Activated T-helper 1 cell treated with anti-CD3 and anti-CD28 coated beads, Interleukin-12 subunit alpha, Interleukin-12 subunit beta, Interleukin-2, Interleukin-4 antibody, amounts not matched to agents 30 ng/mL and 10 ng/mL and 1 ng/mL, durations not matched to agents 14 hours and 24 hours and 36 hours (primary cell): ENCODE measurements at regions of chr1 and their contacts with region 1.

Region 1: GRCh38 chr1:199041173-199041914 is 402.5 kb downstream of the PTPRC start:
- DNase-seq: peak; percentile 66
- H3K4me3 Mint-ChIP-seq: peak overlapping the region; percentile 35
- H3K27ac Mint-ChIP-seq: peak overlapping the region; percentile 83
- H3K4me1 Mint-ChIP-seq: peaks cover 54% of the 10 kb centered on the region
- H3K27me3 Mint-ChIP-seq: no peaks in the 10 kb centered on the region

Region 2: GRCh38 chr1:198620951-198621824 is 420.2 kb before region 1 on chr1:
- intact Hi-C with region 1: loop called (anchors 5 kb)
- DNase-seq: peak; percentile 66
- H3K4me3 Mint-ChIP-seq: peak overlapping the region; percentile 84
- H3K27ac Mint-ChIP-seq: peak overlapping the region; percentile 99
- H3K4me1 Mint-ChIP-seq: peaks cover 82% of the 10 kb centered on the region
- H3K27me3 Mint-ChIP-seq: no peaks in the 10 kb centered on the region

Region 3: GRCh38 chr1:198880818-198881597 is 160.3 kb before region 1 on chr1:
- intact Hi-C with region 1: loop called (anchors 1 kb)
- DNase-seq: no peak
- H3K4me3 Mint-ChIP-seq: no peak overlapping the region
- H3K27ac Mint-ChIP-seq: peak overlapping the region; percentile 71
- H3K4me1 Mint-ChIP-seq: peaks cover 59% of the 10 kb centered on the region
- H3K27me3 Mint-ChIP-seq: no peaks in the 10 kb centered on the region

Region 4: GRCh38 chr1:198892065-198892464 is 149.3 kb before region 1 on chr1:
- intact Hi-C with region 1: no loop called
- DNase-seq: no peak
- H3K4me3 Mint-ChIP-seq: no peak overlapping the region
- H3K27ac Mint-ChIP-seq: no peak overlapping the region
- H3K4me1 Mint-ChIP-seq: peaks cover 56% of the 10 kb centered on the region
- H3K27me3 Mint-ChIP-seq: no peaks in the 10 kb centered on the region

Region 5: GRCh38 chr1:198937231-198938031 is 103.9 kb before region 1 on chr1:
- intact Hi-C with region 1: loop called (anchors 1 kb)
- DNase-seq: peak; percentile 71
- H3K4me3 Mint-ChIP-seq: no peak overlapping the region
- H3K27ac Mint-ChIP-seq: peak overlapping the region; percentile 93
- H3K4me1 Mint-ChIP-seq: peaks cover 33% of the 10 kb centered on the region
- H3K27me3 Mint-ChIP-seq: no peaks in the 10 kb centered on the region

Region 6: GRCh38 chr1:199029855-199030254 is 11.5 kb before region 1 on chr1:
- intact Hi-C with region 1: loop called (anchors 1 kb)
- DNase-seq: no peak
- H3K4me3 Mint-ChIP-seq: peak overlapping the region; percentile 2
- H3K27ac Mint-ChIP-seq: peak overlapping the region; percentile 45
- H3K4me1 Mint-ChIP-seq: peaks cover 57% of the 10 kb centered on the region
- H3K27me3 Mint-ChIP-seq: no peaks in the 10 kb centered on the region

Region 7: GRCh38 chr1:199089393-199090122 is 48.2 kb after region 1 on chr1:
- intact Hi-C with region 1: loop called (anchors 1 kb)
- DNase-seq: peak; percentile 57
- H3K4me3 Mint-ChIP-seq: peak overlapping the region; percentile 32
- H3K27ac Mint-ChIP-seq: peak overlapping the region; percentile 71
- H3K4me1 Mint-ChIP-seq: peaks cover 53% of the 10 kb centered on the region
- H3K27me3 Mint-ChIP-seq: no peaks in the 10 kb centered on the region

Region 8: DNA sequence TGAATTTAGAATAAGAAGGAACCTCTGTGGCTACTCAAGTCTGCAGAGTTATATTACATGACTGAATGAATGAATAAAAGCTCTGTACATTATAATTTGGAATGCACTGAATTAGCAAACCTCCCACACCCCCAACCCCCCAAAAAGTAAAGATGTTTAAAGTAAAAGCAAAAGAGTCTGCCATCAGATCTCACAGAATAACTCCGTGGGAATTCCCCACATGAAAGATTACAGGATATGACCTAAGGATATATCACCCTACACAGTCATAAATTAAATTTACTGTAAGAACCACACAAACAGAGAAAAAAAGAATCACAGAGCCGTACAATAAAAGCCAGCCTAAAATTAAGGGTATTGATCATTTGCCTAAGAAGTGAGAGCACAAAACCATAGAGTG is 184.8 kb after region 1 on chr1:
- intact Hi-C with region 1: loop called (anchors 10 kb)
- DNase-seq: peak; percentile 26
- H3K4me3 Mint-ChIP-seq: peak overlapping the region; percentile 37
- H3K27ac Mint-ChIP-seq: peak overlapping the region; percentile 51
- H3K4me1 Mint-ChIP-seq: peaks cover 21% of the 10 kb centered on the region
- H3K27me3 Mint-ChIP-seq: peaks cover 6% of the 10 kb centered on the region